Ovary (tissue), 10 donors: ENCODE measurements at regions of chr3 and their contacts with region 1.

Region 1: DNA sequence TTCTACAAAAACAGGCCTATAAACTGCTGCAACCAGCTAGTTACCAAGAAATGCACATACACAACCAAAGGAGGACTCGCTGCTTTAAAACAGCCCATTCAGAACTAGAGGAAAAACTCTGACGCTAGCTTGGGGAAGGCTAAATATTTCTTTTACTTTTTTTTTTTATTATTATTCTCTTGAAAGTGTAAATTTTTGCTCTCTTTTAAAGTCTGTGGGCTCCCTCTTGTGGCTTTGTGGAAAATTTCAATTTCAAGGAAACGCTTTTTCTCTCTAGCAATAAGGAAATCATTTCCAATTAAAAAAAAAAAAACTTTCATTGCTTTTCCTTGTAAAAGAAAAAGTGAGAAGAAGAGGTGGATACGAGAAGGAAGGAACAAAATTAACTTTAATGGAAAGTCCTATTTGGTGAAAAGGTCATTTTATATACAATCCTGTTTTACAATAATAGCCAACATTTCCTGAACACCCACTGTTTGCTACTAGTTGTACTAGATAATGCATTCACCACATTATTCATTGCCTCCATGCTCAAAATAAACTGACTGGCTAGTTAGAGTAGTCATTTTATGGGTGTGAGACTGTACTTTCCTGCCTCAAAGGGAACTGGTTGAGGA is 51.2 kb upstream of the SAMMSON start:
- DNase-seq: no peak
- H3K4me3 ChIP-seq: no peak overlapping the region
- H3K27ac ChIP-seq: no peak overlapping the region
- H3K4me1 ChIP-seq: no peaks in the 10 kb centered on the region
- H3K27me3 ChIP-seq: no peaks in the 10 kb centered on the region
- CTCF ChIP-seq: peak; percentile 20 to 47 (median 20)
- EP300 ChIP-seq: no peak
- POLR2A ChIP-seq: no peak

Region 2: GRCh38 chr3:69682878-69683806 is 265.2 kb before region 1 on chr3:
- intact Hi-C with region 1: loop called in 1 of 4 experiments (anchors 5 kb)
- DNase-seq: no peak
- H3K4me3 ChIP-seq: no peak overlapping the region
- H3K27ac ChIP-seq: no peak overlapping the region
- H3K4me1 ChIP-seq: no peaks in the 10 kb centered on the region
- H3K27me3 ChIP-seq: no peaks in the 10 kb centered on the region
- CTCF ChIP-seq: no peak
- EP300 ChIP-seq: no peak
- POLR2A ChIP-seq: no peak

Region 3: DNA sequence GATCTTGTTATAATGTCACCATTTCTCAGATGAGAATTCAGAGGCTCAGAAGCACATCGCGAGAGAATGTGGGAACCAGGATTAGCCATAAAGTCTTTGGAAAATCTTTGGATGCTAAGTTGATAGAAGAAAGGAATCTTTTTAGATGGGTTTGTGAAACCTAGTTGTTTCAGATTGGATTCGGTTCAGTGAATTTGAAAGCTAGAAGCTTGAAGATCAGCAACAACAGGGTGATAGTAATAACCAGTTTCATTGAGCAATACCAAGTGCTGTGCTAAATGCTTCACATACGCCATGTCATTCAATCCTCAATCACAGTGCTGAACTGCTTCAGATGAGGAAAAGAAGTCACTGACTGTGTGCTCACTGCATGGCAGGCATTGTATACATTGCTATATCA is 256.5 kb before region 1 on chr3:
- intact Hi-C with region 1: loop called in 3 of 4 experiments (anchors 5 to 10 kb)
- DNase-seq: no peak
- H3K4me3 ChIP-seq: no peak overlapping the region
- H3K27ac ChIP-seq: no peak overlapping the region
- H3K4me1 ChIP-seq: no peaks in the 10 kb centered on the region
- H3K27me3 ChIP-seq: no peaks in the 10 kb centered on the region
- CTCF ChIP-seq: no peak
- EP300 ChIP-seq: no peak
- POLR2A ChIP-seq: no peak

Region 4: DNA sequence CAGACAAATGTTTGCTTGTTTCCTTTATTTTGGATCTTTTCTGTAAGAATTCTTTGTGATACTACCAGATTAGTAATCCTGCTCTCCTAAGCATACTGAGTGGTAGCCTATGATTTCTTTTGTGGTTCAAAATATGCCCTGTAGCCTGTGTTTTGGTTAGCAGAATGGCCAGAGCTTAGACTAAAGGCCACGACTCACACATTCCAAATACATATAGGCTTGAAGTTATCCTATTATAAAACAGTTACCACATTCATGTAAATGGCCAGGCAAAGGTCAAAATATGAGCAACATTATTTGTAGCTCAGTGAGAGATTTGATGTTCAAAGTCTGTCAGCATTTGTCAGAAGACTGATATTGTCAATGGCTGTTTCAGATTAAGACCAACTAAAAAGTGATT is 124.6 kb before region 1 on chr3:
- intact Hi-C with region 1: no loop called
- DNase-seq: no peak
- H3K4me3 ChIP-seq: no peak overlapping the region
- H3K27ac ChIP-seq: no peak overlapping the region
- H3K4me1 ChIP-seq: peaks cover 6% of the 10 kb centered on the region
- H3K27me3 ChIP-seq: no peaks in the 10 kb centered on the region
- CTCF ChIP-seq: no peak
- EP300 ChIP-seq: no peak
- POLR2A ChIP-seq: no peak